Heart left ventricle (tissue), 16 donors: ENCODE measurements at regions of chr20 and their contacts with region 1.

Region 1: DNA sequence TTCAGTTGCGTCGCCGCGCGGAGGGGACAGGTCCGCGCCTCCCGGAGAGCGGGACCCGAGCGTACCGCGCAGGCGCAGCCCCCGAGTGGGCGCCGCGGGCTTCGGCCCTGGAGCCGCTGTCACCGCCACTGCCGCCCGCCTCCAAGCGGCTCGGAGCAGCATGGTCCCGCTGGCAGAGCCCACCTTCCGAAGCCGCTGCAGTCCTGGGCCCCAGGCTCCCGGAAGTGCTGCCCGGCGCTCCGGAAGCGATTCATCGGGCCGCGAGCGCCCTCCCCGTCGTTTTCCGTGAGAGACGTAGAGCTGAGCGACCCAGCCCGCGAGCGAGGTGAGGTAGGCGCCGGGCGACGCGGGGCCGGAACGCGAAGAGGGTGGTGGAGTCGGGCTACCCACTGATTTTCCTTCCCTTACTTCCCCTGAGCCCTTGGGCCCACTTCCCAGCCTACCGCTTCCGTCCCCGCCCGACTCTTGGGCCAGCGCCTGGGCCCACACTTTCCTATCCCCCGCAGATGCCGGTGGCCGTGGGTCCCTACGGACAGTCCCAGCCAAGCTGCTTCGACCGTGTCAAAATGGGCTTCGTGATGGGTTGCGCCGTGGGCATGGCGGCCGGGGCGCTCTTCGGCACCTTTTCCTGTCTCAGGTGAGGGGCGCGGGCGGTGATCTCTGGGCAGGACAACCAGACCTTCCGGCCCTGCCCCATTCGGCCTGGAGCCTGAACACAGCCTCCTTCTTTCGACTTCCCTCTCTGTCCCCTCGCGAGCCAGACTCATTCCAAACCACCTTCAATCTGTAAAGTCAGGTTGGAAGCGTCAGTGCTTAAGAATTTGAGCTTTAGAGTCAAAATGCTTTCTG is at the starts of genes NFS1 and ROMO1:
- DNase-seq: peak; percentile 85 to 93 (median 89)
- ATAC-seq: peak; percentile 86 to 95 (median 94)
- H3K4me3 ChIP-seq: peak within 1 kb of the TSS; percentile 68 to 99 (median 88)
- H3K27ac ChIP-seq: peak within 1 kb of the TSS; percentile 76 to 94 (median 91)
- H3K4me1 ChIP-seq: peaks cover 4 to 29% (median 17%) of the 10 kb centered on the region in 12 donors
- H3K27me3 ChIP-seq: no peaks in the 10 kb centered on the region
- CTCF ChIP-seq: peak in 9 of 12 donors; percentile 14 to 51 (median 24)
- POLR2A ChIP-seq: peak; percentile 6 to 71
- total RNA-seq, gene NFS1: 38.1 to 67.5 (median 58.3) TPM
- total RNA-seq, gene ROMO1: 120 to 591 (median 174) TPM

Region 2: DNA sequence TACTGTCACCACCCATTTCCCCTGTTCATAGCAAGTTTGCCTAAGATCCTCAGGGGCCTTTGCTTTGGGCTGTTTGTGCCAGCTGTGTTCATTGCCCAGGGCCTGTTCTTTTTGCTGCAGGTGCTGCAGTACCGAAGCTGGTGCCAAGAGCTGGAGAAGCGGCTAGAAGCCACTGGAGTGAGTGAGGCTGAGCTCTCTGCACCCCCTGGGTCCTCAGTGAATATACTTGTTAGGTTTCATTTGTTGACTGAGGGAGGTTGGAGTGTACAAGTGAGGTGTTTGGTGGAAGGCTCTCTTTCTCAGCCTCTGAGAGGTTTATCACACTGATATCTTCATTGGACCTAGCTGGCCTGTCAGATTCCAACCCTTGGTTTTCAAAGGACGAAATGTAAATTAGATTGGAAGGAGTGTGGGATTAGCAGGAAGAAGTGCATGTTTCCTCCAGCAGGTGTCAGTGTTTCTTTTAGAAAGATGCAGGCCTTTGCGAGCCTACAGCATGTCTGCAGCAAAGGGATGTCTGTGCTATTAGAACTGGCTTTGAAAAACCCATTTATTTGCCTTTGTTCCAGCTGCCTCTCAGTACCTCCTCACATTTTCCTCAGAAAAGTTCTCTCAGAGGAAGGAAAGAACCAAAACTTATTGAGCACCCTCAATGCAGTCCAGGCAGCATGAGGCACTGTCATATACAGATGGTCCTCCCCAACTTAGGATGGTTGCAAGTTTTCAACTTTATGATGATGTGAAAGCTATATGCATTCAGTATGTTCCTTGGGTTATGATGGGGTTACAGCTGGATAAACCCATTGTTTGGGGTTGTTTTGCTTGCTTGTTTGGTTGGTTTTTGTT is 235.7 kb before region 1 on chr20:
- intact Hi-C with region 1: loop called in 1 of 10 experiments (anchors 5 kb)
- DNase-seq: peak in 4 of 5 donors; percentile 34 to 44 (median 38)
- ATAC-seq: peak; percentile 24 to 79 (median 76)
- H3K4me3 ChIP-seq: no peak overlapping the region
- H3K27ac ChIP-seq: no peak overlapping the region
- H3K4me1 ChIP-seq: peaks cover 0 to 6% (median 0%) of the 10 kb centered on the region in 12 donors
- H3K27me3 ChIP-seq: no peaks in the 10 kb centered on the region
- CTCF ChIP-seq: peak; percentile 67 to 90 (median 78)
- POLR2A ChIP-seq: no peak

Region 3: GRCh38 chr20:35511814-35512420 is 187.4 kb before region 1 on chr20:
- intact Hi-C with region 1: loop called in 1 of 10 experiments (anchors 10 kb)
- DNase-seq: no peak
- ATAC-seq: peak in 3 of 4 donors; percentile 25 to 51 (median 29)
- H3K4me3 ChIP-seq: no peak overlapping the region
- H3K27ac ChIP-seq: no peak overlapping the region
- H3K4me1 ChIP-seq: peaks cover 0 to 7% (median 0%) of the 10 kb centered on the region in 12 donors
- H3K27me3 ChIP-seq: no peaks in the 10 kb centered on the region
- CTCF ChIP-seq: peak; percentile 31 to 69 (median 55)
- POLR2A ChIP-seq: no peak

Region 4: DNA sequence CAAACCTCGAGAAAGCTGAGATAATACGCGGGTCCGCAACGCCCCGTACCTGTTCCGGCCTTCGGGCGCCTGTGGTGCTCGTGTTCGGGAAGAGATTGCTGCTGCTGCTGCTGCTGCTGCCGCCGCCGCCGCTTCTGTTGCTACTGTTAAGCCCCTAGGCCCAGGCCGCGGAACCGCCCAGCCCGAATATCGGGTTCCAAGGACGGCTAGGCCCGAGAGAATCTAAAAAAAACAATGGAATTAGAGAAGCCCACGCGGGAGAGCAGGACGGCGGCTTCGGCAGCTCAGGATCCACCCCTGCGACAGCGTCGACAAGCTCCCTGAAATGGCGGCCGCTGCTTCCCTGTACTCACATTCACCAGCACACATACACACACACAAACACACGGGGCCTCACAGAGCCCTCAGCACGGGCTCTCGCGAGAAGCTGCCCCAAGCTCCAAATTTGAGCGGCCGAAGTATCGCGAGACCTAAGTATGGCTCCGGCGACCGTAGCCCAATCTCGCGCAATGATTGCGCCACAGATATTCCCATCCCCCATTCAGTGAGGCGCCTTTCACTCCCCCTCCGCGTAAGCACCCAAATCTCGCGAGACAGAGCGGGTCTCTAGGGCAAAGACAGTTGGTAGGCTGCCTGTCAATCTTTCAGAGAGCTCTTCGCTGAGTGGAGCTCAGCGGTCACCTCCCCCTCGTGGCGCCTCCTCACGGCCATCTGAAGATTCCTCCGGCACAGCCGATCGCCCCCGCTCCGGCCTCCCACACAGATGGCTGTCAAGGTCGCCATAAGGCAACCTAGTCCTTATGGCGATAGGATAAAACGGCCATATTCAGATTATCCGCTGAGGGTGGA is 42.8 kb after region 1 on chr20 and contains the start of gene RBM39:
- intact Hi-C with region 1: loop called in 2 of 10 experiments (anchors 5 kb)
- DNase-seq: peak; percentile 100
- ATAC-seq: peak; percentile 93 to 97 (median 96)
- H3K4me3 ChIP-seq: peak within 1 kb of the TSS; percentile 62 to 91 (median 78)
- H3K27ac ChIP-seq: peak within 1 kb of the TSS; percentile 96 to 100 (median 99)
- H3K4me1 ChIP-seq: peaks cover 7 to 56% (median 34%) of the 10 kb centered on the region in 12 donors
- H3K27me3 ChIP-seq: no peaks in the 10 kb centered on the region
- CTCF ChIP-seq: peak; percentile 19 to 74 (median 46)
- POLR2A ChIP-seq: peak; percentile 73 to 86
- total RNA-seq, gene RBM39: 72.6 to 147 (median 112) TPM